Caco-2 (cell line): ENCODE measurements at regions of chr11 and their contacts with region 1.

Region 1: GRCh38 chr11:71251761-71252443 is 475 bp downstream of the SHANK2 start:
- DNase-seq: peak; percentile 74 to 92
- H3K4me3 ChIP-seq: peak overlapping the region; percentile 67
- H3K4me3 Mint-ChIP-seq: peak overlapping the region; percentile 83
- H3K27ac Mint-ChIP-seq: peak overlapping the region; percentile 95
- H3K4me1 ChIP-seq: peaks cover 53% of the 10 kb centered on the region
- H3K4me1 Mint-ChIP-seq: peaks cover 61% of the 10 kb centered on the region
- H3K27me3 ChIP-seq: no peaks in the 10 kb centered on the region
- H3K27me3 Mint-ChIP-seq: no peaks in the 10 kb centered on the region
- CTCF ChIP-seq: peak; percentile 54 to 87

Region 2: GRCh38 chr11:71120490-71120896 is 131.4 kb before region 1 on chr11:
- CTCF ChIA-PET with region 1: interaction called, 20 read pairs
- POLR2A ChIA-PET with region 1: no interaction called
- intact Hi-C with region 1: loop called (anchors 2 kb)
- DNase-seq: peak; percentile 70
- H3K4me3 ChIP-seq: no peak overlapping the region
- H3K4me3 Mint-ChIP-seq: no peak overlapping the region
- H3K27ac Mint-ChIP-seq: no peak overlapping the region
- H3K4me1 ChIP-seq: peaks cover 19% of the 10 kb centered on the region
- H3K4me1 Mint-ChIP-seq: peaks cover 14% of the 10 kb centered on the region
- H3K27me3 ChIP-seq: no peaks in the 10 kb centered on the region
- H3K27me3 Mint-ChIP-seq: no peaks in the 10 kb centered on the region
- CTCF ChIP-seq: peak; percentile 54 to 81

Region 3: DNA sequence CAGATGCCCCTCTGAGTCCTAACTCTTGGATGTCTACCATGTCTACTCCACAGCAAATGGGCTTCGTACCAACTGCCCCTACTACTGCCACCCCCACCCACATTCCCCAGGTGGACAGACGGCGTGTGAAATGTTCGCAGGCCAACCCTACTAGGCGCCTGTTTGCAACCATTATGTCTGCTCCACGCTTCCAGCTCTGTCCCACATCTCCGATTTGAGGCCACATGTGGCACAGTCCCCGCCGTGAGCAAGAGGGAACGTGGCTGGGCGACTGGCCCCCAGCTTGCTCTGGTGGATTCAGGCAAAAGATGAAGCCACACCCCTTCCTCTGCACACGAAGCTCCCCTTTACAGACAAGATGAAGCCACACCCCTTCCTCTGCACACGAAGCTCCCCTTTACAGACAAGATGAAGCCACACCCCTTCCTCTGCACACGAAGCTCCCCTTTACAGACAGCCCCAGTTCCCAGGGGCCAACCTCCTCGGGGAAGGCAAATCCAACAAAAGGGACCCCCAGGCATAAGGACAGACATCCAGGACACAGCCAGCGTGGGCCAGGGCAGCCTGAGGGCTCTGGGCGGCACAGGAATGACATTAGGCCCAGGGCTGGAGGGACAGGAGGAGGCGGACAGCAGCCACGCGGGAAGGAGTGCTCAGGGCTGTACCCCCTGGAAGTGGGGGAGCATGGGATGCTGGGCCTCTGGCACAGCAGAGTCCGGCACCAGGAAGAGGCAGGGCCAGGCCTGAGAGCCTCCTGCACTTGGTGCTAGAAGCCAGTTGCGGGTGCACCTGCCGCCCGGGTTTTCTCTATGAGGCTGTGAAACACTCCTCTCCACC is 105.7 kb before region 1 on chr11:
- CTCF ChIA-PET with region 1: no interaction called
- POLR2A ChIA-PET with region 1: no interaction called
- intact Hi-C with region 1: no loop called
- DNase-seq: no peak
- H3K4me3 ChIP-seq: no peak overlapping the region
- H3K4me3 Mint-ChIP-seq: no peak overlapping the region
- H3K27ac Mint-ChIP-seq: no peak overlapping the region
- H3K4me1 ChIP-seq: no peaks in the 10 kb centered on the region
- H3K4me1 Mint-ChIP-seq: no peaks in the 10 kb centered on the region
- H3K27me3 ChIP-seq: no peaks in the 10 kb centered on the region
- H3K27me3 Mint-ChIP-seq: no peaks in the 10 kb centered on the region
- CTCF ChIP-seq: no peak

Region 4: DNA sequence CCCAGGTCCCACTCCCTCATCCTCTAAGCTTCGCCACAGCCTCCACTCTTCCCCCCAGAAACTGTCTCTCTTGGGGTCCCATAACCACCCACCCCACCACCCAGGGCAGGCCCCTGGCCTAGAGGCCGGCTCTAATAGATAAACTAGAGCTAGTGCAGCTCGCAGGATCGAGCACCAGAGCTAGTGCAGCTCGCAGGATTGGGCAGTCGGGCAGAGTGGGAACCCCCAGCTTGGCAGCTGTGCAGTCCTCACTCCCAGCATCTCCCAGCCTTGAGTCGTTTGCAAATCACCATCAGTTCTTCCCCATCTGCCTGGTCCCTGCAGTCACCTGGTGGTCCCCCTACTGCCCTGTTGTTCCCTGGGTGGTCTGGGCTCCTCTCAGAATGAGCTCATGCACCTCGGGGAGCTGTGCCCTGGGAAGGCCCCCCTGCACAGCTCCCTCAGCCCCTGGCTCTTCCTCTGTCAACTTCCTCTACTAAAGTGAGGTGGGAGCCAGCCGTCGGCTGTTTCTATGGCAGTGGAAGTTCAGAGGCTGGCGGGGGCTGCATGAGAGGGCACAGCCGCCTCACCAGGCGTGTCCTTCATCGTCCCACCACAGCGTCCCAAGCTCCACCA is 16.0 kb after region 1 on chr11:
- CTCF ChIA-PET with region 1: interaction called, 4 read pairs
- POLR2A ChIA-PET with region 1: interaction called, 8 read pairs
- intact Hi-C with region 1: loop called (anchors 1 kb)
- DNase-seq: peak in 1 of 2 experiments; percentile 33
- H3K4me3 ChIP-seq: no peak overlapping the region
- H3K4me3 Mint-ChIP-seq: no peak overlapping the region
- H3K27ac Mint-ChIP-seq: peak overlapping the region; percentile 63
- H3K4me1 ChIP-seq: peaks cover 50% of the 10 kb centered on the region
- H3K4me1 Mint-ChIP-seq: peaks cover 46% of the 10 kb centered on the region
- H3K27me3 ChIP-seq: no peaks in the 10 kb centered on the region
- H3K27me3 Mint-ChIP-seq: no peaks in the 10 kb centered on the region
- CTCF ChIP-seq: no peak

Region 5: DNA sequence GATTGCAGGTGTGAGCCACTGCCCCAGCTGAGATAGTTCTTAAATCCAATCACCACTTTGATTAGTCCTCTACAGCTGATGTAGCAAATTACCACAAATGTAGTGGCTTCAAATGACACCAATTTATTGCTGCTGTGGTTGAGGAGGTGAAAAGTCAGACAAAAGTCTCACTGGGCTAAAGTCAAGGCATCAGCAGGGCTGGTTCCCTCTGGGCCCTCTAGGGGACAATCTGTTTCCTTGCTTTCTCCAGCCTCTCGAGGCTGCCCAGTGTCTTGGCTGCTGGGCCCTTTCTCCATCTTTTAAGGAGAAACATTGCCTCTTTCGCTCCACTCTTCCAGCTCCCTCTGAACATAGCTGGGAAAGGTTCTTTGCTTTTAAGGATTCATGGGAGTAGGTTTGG is 51.0 kb after region 1 on chr11:
- CTCF ChIA-PET with region 1: interaction called, 11 read pairs
- POLR2A ChIA-PET with region 1: interaction called, 12 read pairs
- intact Hi-C with region 1: loop called (anchors 1 kb)
- DNase-seq: peak in 1 of 2 experiments; percentile 46
- H3K4me3 ChIP-seq: no peak overlapping the region
- H3K4me3 Mint-ChIP-seq: no peak overlapping the region
- H3K27ac Mint-ChIP-seq: no peak overlapping the region
- H3K4me1 ChIP-seq: peaks cover 35% of the 10 kb centered on the region
- H3K4me1 Mint-ChIP-seq: peaks cover 27% of the 10 kb centered on the region
- H3K27me3 ChIP-seq: no peaks in the 10 kb centered on the region
- H3K27me3 Mint-ChIP-seq: no peaks in the 10 kb centered on the region
- CTCF ChIP-seq: peak; percentile 39 to 62

Region 6: GRCh38 chr11:71342951-71343827 is 91.3 kb after region 1 on chr11:
- CTCF ChIA-PET with region 1: interaction called, 5 read pairs
- POLR2A ChIA-PET with region 1: interaction called, 3 read pairs
- intact Hi-C with region 1: loop called (anchors 1 kb)
- DNase-seq: peak; percentile 84 to 85
- H3K4me3 ChIP-seq: no peak overlapping the region
- H3K4me3 Mint-ChIP-seq: no peak overlapping the region
- H3K27ac Mint-ChIP-seq: no peak overlapping the region
- H3K4me1 ChIP-seq: peaks cover 8% of the 10 kb centered on the region; the same call in 1 of the 2 replicates
- H3K4me1 Mint-ChIP-seq: peaks cover 6% of the 10 kb centered on the region
- H3K27me3 ChIP-seq: no peaks in the 10 kb centered on the region
- H3K27me3 Mint-ChIP-seq: peaks cover 9% of the 10 kb centered on the region
- CTCF ChIP-seq: peak; percentile 87 to 94

Region 7: DNA sequence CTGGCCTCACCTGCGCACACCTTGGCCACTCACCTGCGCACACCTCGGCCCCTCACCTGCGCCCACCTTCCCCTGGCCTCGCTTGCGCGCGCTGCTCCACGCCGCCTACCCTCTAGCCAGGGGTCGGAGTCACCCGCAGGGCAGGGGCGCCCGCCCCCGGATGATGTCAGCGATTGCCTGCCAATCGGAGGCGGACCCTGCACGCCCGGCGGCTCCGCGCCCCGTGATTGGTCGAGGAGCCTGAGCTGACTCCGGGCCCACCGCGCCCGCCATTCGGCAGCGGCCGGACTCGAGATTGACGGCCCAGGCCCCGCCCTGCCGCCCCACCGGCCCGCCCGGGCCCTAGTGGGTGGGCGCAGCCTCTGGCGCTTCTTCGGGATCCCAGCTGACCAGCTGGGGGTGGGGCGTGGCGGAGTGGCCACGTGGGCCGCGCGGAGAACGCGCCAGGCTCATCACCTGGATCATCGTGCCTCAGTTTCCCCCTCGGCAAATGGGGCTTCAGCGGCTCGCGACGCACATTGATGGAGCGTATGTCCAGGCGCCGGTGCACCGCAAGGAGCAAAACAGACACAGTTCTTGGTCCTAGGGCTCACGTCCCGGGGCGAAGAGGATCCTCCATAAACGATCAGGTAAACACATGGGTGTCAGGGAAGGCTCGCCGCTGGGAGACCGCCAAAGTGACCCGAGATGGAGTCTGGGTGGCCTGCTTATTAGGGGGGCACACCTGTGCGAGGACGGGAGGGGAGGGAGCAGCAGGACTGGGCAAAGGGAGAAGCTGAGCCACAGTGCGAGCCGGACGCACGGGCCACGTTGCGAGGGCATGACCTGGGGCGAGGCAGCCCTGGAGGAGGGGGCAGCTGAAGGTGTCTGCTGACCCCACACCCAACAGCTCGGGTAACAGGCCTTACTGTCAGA is 196.6 kb after region 1 on chr11 and contains the start of gene DHCR7:
- CTCF ChIA-PET with region 1: interaction called, 6 read pairs
- POLR2A ChIA-PET with region 1: interaction called, 7 read pairs
- intact Hi-C with region 1: loop called (anchors 5 kb)
- DNase-seq: peak; percentile 99 to 100
- H3K4me3 ChIP-seq: peak within 1 kb of the TSS; percentile 88
- H3K4me3 Mint-ChIP-seq: peak within 1 kb of the TSS; percentile 86
- H3K27ac Mint-ChIP-seq: peak within 1 kb of the TSS; percentile 59
- H3K4me1 ChIP-seq: peaks cover 21% of the 10 kb centered on the region
- H3K4me1 Mint-ChIP-seq: peaks cover 36% of the 10 kb centered on the region
- H3K27me3 ChIP-seq: no peaks in the 10 kb centered on the region
- H3K27me3 Mint-ChIP-seq: no peaks in the 10 kb centered on the region
- CTCF ChIP-seq: no peak
- total RNA-seq, gene DHCR7: 344 and 371 TPM in 2 replicates